ENCODE measurements at regions of chr5 and their contacts with region 1.

Region 1: DNA sequence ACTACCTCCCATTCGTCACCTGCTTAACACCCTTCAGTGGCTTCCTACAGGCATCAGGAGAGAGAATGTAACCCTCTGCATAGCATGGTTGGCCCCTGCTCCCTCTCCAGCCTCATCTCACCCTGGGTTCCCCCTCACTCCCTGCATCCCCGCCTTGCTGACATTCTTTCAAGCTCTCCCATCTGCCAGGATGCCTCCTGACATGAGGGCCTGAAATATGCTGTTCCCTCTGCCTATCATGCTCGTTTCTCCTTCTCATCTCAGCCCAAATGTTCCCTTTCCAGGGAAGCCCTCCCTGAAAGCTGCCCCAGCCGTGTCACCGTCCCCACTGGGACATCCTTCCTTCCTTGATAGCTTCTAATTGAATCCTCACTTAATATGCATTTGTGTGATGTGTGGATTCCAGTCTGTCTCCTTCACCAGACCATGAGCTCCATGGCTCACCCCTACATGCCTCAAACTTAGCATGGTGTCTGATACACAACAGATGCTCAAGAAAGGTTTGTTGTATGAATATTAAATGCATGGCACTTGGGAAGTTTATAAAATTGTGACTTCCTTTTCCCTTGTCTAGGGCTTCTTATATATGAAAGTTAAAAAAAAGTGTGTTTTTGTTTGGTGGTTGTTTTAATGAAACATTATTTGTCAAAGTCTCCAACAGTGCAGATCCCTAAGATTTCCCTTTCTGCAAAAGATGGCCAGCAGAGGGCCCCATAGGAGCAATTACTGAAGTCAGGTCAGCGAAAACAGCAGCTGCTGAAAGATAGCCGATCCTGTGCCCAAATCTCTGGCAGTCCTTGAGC is 7.3 kb upstream of the C5orf58 start:
- DNase-seq: peak; percentile 47 to 86 (median 79)
- ATAC-seq: peak; percentile 69
- H3K4me3 ChIP-seq: no peak overlapping the region
- H3K4me3 Mint-ChIP-seq: no peak overlapping the region
- H3K27ac ChIP-seq: no peak overlapping the region
- H3K27ac Mint-ChIP-seq: no peak overlapping the region
- H3K4me1 ChIP-seq: peaks cover 6% of the 10 kb centered on the region
- H3K4me1 Mint-ChIP-seq: peaks cover 4% of the 10 kb centered on the region
- H3K27me3 ChIP-seq: no peaks in the 10 kb centered on the region
- H3K27me3 Mint-ChIP-seq: no peaks in the 10 kb centered on the region
- CTCF ChIP-seq: peak; percentile 88

Region 2: GRCh38 chr5:169745441-169746146 is 479.9 kb before region 1 on chr5:
- CTCF ChIA-PET with region 1: no interaction called
- POLR2A ChIA-PET with region 1: no interaction called
- intact Hi-C with region 1: no loop called
- DNase-seq: no peak
- ATAC-seq: no peak
- H3K4me3 ChIP-seq: no peak overlapping the region
- H3K4me3 Mint-ChIP-seq: no peak overlapping the region
- H3K27ac ChIP-seq: no peak overlapping the region
- H3K27ac Mint-ChIP-seq: peak overlapping the region; percentile 2
- H3K4me1 ChIP-seq: no peaks in the 10 kb centered on the region
- H3K4me1 Mint-ChIP-seq: peaks cover 3% of the 10 kb centered on the region
- H3K27me3 ChIP-seq: no peaks in the 10 kb centered on the region
- H3K27me3 Mint-ChIP-seq: no peaks in the 10 kb centered on the region
- CTCF ChIP-seq: no peak

Region 3: DNA sequence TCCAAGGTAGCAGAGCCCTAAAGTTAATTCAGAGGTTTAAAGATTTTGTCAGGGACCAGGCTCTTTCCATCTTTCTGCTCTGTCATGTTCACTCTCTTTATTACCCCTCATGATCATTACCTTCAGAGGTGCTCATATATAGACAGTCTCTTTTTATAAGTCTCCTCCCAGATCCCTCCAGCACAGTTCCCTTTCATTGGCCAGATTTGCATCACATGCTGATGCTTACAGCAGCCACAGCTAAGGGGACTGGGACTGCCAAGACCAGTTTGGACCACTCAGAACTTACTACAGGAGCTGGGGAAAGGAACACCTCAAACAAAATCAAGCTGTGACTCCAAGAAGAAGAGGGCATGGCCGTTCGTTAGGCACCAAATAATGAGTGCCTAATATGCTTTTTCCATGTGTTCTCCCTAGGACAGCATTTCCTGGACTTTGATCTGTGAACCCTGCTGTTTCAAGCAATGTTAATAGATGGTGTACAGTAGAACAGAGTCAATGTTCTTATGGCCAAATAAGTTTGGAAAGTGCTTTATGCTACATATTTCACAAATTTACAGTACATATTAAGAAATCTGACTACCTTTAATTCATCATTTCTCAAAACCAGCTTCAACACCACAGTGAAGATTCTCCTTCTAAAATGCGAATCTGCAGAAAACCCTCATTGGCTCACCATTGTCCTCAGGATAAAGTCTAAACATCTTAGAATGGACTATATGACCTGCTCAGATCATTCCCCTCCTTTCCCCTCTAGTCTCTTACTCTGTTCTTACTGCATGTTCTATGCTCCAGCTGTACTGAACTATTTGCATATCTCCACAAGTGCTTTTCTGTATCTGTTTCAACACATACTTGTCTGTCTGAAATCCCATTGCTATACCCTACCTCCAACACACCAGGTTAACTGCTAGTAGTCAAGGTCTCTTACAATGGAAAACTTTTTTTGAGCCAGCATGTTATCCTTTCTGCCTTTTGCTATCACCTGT is 10.6 kb after region 1 on chr5:
- CTCF ChIA-PET with region 1: interaction called, 50 read pairs
- POLR2A ChIA-PET with region 1: no interaction called
- intact Hi-C with region 1: no loop called
- DNase-seq: no peak
- ATAC-seq: no peak
- H3K4me3 ChIP-seq: no peak overlapping the region
- H3K4me3 Mint-ChIP-seq: no peak overlapping the region
- H3K27ac ChIP-seq: no peak overlapping the region
- H3K27ac Mint-ChIP-seq: peak overlapping the region; percentile 76
- H3K4me1 ChIP-seq: no peaks in the 10 kb centered on the region
- H3K4me1 Mint-ChIP-seq: peaks cover 14% of the 10 kb centered on the region
- H3K27me3 ChIP-seq: no peaks in the 10 kb centered on the region
- H3K27me3 Mint-ChIP-seq: no peaks in the 10 kb centered on the region
- CTCF ChIP-seq: no peak

Region 4: GRCh38 chr5:170253844-170254455 is 28.4 kb after region 1 on chr5:
- CTCF ChIA-PET with region 1: interaction called, 12 read pairs
- POLR2A ChIA-PET with region 1: no interaction called
- intact Hi-C with region 1: no loop called
- DNase-seq: peak; percentile 44 to 92 (median 73)
- ATAC-seq: peak; percentile 95
- H3K4me3 ChIP-seq: no peak overlapping the region
- H3K4me3 Mint-ChIP-seq: peak overlapping the region; percentile 16
- H3K27ac ChIP-seq: peak overlapping the region; percentile 38 to 61
- H3K27ac Mint-ChIP-seq: peak overlapping the region; percentile 95
- H3K4me1 ChIP-seq: peaks cover 39% of the 10 kb centered on the region
- H3K4me1 Mint-ChIP-seq: peaks cover 77% of the 10 kb centered on the region
- H3K27me3 ChIP-seq: no peaks in the 10 kb centered on the region
- H3K27me3 Mint-ChIP-seq: no peaks in the 10 kb centered on the region
- CTCF ChIP-seq: no peak

Region 5: DNA sequence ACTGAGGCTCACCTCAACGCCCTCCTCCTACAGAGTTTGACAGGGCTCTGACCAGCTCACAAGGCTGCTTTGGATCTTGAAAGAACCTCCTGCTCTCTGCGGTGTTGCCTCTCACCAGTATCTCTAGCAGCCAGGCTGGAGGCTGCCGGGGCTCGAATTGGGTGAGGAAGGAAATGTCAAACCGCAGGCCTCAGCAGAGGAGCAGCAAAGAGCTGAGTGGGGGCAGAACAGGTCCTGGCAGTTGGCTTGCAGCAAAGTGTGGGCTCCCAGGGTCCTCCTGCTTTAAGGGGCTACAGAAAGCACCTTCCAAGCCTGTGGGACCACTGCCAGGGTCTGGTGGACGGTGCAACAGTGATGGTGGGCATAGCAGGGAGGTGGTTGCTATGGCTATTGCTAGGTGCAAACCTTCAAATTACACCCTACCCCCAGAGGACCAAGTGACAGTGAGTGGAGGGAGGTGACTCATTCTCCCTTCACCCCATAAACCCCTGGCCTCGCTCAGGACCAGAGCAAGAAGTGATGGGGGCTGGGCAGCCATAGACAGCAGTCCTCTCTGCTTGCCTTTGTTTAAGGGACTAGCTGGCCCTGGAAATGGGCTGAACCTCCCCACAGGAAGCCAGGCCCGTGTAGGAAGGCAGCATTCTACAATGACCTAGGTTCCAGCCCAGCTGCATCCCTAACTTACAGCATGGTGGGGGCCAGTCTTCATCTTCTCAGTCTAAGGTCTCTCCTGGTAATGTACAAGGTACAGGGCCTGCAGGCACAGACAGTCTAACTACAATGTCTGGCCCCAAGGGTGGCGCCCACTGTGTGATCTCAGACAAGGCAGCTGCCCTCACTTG is 53.3 kb after region 1 on chr5:
- CTCF ChIA-PET with region 1: interaction called, 61 read pairs
- POLR2A ChIA-PET with region 1: interaction called, 7 read pairs
- intact Hi-C with region 1: loop called in 1 of 2 experiments (anchors 1 kb)
- DNase-seq: peak; percentile 76 to 97 (median 88)
- ATAC-seq: peak; percentile 67
- H3K4me3 ChIP-seq: peak overlapping the region; percentile 28 to 40
- H3K4me3 Mint-ChIP-seq: peak overlapping the region; percentile 78
- H3K27ac ChIP-seq: peak overlapping the region; percentile 36 to 76
- H3K27ac Mint-ChIP-seq: peak overlapping the region; percentile 97
- H3K4me1 ChIP-seq: peaks cover 95% of the 10 kb centered on the region
- H3K4me1 Mint-ChIP-seq: peaks cover 97% of the 10 kb centered on the region
- H3K27me3 ChIP-seq: no peaks in the 10 kb centered on the region
- H3K27me3 Mint-ChIP-seq: no peaks in the 10 kb centered on the region
- CTCF ChIP-seq: no peak

Region 6: GRCh38 chr5:170293273-170293672 is 67.7 kb after region 1 on chr5:
- CTCF ChIA-PET with region 1: interaction called, 41 read pairs
- POLR2A ChIA-PET with region 1: no interaction called
- intact Hi-C with region 1: no loop called
- DNase-seq: peak in 6 of 9 experiments; percentile 53 to 86 (median 72)
- ATAC-seq: peak; percentile 29
- H3K4me3 ChIP-seq: peak overlapping the region; percentile 87 to 94
- H3K4me3 Mint-ChIP-seq: peak overlapping the region; percentile 99
- H3K27ac ChIP-seq: peak overlapping the region in 1 of 2 experiments; percentile 86
- H3K27ac Mint-ChIP-seq: peak overlapping the region; percentile 97
- H3K4me1 ChIP-seq: peaks cover 73% of the 10 kb centered on the region
- H3K4me1 Mint-ChIP-seq: peaks cover 82% of the 10 kb centered on the region
- H3K27me3 ChIP-seq: no peaks in the 10 kb centered on the region
- H3K27me3 Mint-ChIP-seq: no peaks in the 10 kb centered on the region
- CTCF ChIP-seq: no peak

Region 7: GRCh38 chr5:170420780-170421412 is 195.4 kb after region 1 on chr5:
- CTCF ChIA-PET with region 1: interaction called, 50 read pairs
- POLR2A ChIA-PET with region 1: no interaction called
- intact Hi-C with region 1: loop called (anchors 1 kb)
- DNase-seq: peak; percentile 22 to 75 (median 48)
- ATAC-seq: peak; percentile 58
- H3K4me3 ChIP-seq: no peak overlapping the region
- H3K4me3 Mint-ChIP-seq: no peak overlapping the region
- H3K27ac ChIP-seq: no peak overlapping the region
- H3K27ac Mint-ChIP-seq: no peak overlapping the region
- H3K4me1 ChIP-seq: peaks cover 18% of the 10 kb centered on the region
- H3K4me1 Mint-ChIP-seq: peaks cover 25% of the 10 kb centered on the region
- H3K27me3 ChIP-seq: no peaks in the 10 kb centered on the region
- H3K27me3 Mint-ChIP-seq: no peaks in the 10 kb centered on the region
- CTCF ChIP-seq: peak; percentile 79

Region 8: DNA sequence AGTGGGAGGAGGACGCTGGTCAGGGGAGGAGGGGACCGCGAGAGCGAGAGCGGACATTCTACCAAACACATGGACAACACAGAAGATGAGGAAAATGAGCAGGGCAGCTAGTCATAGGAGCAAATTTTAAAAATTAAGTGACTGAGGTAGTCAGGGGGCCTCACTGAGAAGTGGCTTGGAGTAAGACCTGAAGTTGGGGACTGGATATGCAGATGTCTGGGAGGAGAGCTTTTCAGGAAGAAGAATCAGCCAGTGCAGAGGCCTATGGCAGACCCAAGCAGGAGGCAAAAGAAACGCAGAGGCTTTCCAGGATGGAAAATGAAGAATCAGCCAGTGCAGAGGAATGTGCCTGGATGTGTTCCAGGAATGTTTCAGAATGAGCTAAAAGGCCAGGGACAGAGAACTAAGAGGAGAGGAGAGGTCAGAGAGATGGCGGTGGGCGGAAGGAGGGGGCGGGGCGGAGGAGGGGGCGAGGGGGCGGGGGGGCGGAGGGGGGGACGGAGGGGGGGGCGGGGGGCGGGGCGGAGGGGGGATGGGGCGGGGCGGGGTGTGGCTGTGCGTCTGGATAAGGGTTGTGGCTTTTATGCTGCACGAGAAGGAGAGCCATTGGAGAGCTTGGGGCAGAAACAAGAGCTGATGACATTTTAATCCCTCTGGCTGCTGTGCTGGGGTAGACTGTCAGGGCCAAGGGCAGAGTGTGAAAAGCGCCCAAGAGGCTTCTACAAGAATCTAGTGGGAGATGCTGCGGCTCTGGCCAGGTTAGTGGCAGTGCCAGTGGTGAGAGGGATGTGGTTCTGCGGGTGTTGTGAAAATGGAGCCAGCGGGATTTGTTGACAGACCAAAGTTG is 407.9 kb after region 1 on chr5:
- CTCF ChIA-PET with region 1: interaction called, 3 read pairs
- POLR2A ChIA-PET with region 1: no interaction called
- intact Hi-C with region 1: loop called in 1 of 2 experiments (anchors 1 kb)
- DNase-seq: no peak
- ATAC-seq: peak; percentile 40
- H3K4me3 ChIP-seq: peak overlapping the region; percentile 26 to 37
- H3K4me3 Mint-ChIP-seq: peak overlapping the region; percentile 88
- H3K27ac ChIP-seq: no peak overlapping the region
- H3K27ac Mint-ChIP-seq: no peak overlapping the region
- H3K4me1 ChIP-seq: peaks cover 11% of the 10 kb centered on the region
- H3K4me1 Mint-ChIP-seq: peaks cover 20% of the 10 kb centered on the region
- H3K27me3 ChIP-seq: no peaks in the 10 kb centered on the region
- H3K27me3 Mint-ChIP-seq: peaks cover 13% of the 10 kb centered on the region
- CTCF ChIP-seq: peak; percentile 57

Region 9: GRCh38 chr5:172123269-172123692 is 1897.8 kb after region 1 on chr5:
- CTCF ChIA-PET with region 1: no interaction called
- POLR2A ChIA-PET with region 1: no interaction called
- intact Hi-C with region 1: no loop called
- DNase-seq: no peak
- ATAC-seq: no peak
- H3K4me3 ChIP-seq: no peak overlapping the region
- H3K4me3 Mint-ChIP-seq: no peak overlapping the region
- H3K27ac ChIP-seq: peak overlapping the region in 1 of 2 experiments; percentile 45
- H3K27ac Mint-ChIP-seq: peak overlapping the region; percentile 88
- H3K4me1 ChIP-seq: peaks cover 19% of the 10 kb centered on the region
- H3K4me1 Mint-ChIP-seq: peaks cover 53% of the 10 kb centered on the region
- H3K27me3 ChIP-seq: no peaks in the 10 kb centered on the region
- H3K27me3 Mint-ChIP-seq: no peaks in the 10 kb centered on the region
- CTCF ChIP-seq: no peak